Naive thymus-derived CD4-positive, alpha-beta T cell (primary cell): ENCODE measurements at regions of chr3 and their contacts with region 1.

Region 1: DNA sequence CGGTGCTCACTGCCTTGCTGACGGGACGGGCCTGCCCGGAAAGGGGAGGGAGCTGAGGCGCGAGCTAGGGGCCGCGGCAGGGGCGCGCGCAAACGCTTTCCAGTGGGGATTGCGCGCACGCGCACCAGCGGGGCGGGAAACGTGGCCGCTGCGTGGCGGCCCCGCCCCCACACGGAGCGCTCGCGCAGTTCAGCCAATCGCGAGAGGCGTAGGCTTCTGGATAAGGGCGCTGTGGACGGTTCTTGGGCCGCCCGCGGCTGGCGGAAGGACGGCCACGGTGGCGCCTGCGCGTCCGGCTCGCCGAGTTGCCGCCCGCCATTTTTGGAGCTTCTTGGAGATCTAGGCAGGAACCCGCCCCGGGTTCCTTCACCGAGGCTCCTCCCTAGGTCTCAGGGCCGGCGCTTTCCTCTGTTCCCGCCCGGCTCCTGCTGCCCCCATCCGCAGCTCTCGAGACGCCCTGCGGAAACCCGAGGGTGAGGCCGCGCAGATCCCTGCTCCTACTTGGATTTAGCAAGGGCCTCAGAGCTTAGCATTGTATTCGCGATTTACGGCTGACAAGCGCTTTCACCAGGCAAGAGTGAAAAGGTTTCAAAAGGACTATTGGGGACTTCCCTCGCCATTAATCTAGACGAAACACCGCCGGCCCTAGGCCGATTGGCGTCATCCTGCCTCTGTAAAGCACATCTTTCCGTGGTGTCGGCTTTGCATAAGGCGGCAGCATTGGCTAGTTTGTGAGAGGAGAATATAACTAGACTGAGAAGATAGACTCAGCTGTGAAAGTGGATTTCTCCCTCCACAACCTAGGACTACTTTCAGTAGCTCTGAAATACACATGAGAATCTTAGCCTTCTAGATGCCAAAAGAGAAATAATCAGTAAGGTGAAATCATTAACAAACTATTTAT is 496 bp upstream of the STAG1 start:
- DNase-seq: peak; percentile 95 to 99 (median 99)
- ATAC-seq: peak; percentile 91
- H3K4me3 ChIP-seq: peak overlapping the region; percentile 87
- H3K4me3 Mint-ChIP-seq: peak overlapping the region; percentile 68 to 99 (median 88)
- H3K27ac ChIP-seq: peak overlapping the region; percentile 95
- H3K27ac Mint-ChIP-seq: peak overlapping the region; percentile 80 to 98 (median 94)
- H3K4me1 ChIP-seq: peaks cover 20 to 27% of the 10 kb centered on the region in 2 donors
- H3K4me1 Mint-ChIP-seq: peaks cover 37 to 50% (median 43%) of the 10 kb centered on the region in 7 donors
- H3K27me3 ChIP-seq: no peaks in the 10 kb centered on the region
- H3K27me3 Mint-ChIP-seq: no peaks in the 10 kb centered on the region

Region 2: GRCh38 chr3:135141160-135141559 is 1611.5 kb before region 1 on chr3:
- CTCF ChIA-PET with region 1: no interaction called
- POLR2A ChIA-PET with region 1: no interaction called
- intact Hi-C with region 1: no loop called
- DNase-seq: no peak
- ATAC-seq: no peak
- H3K4me3 ChIP-seq: no peak overlapping the region
- H3K4me3 Mint-ChIP-seq: no peak overlapping the region
- H3K27ac ChIP-seq: no peak overlapping the region
- H3K27ac Mint-ChIP-seq: no peak overlapping the region
- H3K4me1 ChIP-seq: no peaks in the 10 kb centered on the region
- H3K4me1 Mint-ChIP-seq: peaks cover 0 to 2% (median 0%) of the 10 kb centered on the region in 7 donors
- H3K27me3 ChIP-seq: no peaks in the 10 kb centered on the region
- H3K27me3 Mint-ChIP-seq: peaks cover 0 to 13% (median 5%) of the 10 kb centered on the region in 5 donors

Region 3: GRCh38 chr3:136196401-136197158 is 556.1 kb before region 1 on chr3:
- CTCF ChIA-PET with region 1: interaction called, 7 read pairs
- POLR2A ChIA-PET with region 1: interaction called, 68 read pairs
- intact Hi-C with region 1: loop called (anchors 1 kb)
- DNase-seq: peak; percentile 94 to 99 (median 98)
- ATAC-seq: peak; percentile 73
- H3K4me3 ChIP-seq: peak overlapping the region; percentile 77
- H3K4me3 Mint-ChIP-seq: peak overlapping the region; percentile 91 to 99 (median 98)
- H3K27ac ChIP-seq: peak overlapping the region; percentile 94
- H3K27ac Mint-ChIP-seq: peak overlapping the region; percentile 96 to 100 (median 99)
- H3K4me1 ChIP-seq: peaks cover 6 to 11% of the 10 kb centered on the region in 2 donors
- H3K4me1 Mint-ChIP-seq: peaks cover 20 to 38% (median 35%) of the 10 kb centered on the region in 7 donors
- H3K27me3 ChIP-seq: no peaks in the 10 kb centered on the region
- H3K27me3 Mint-ChIP-seq: peaks cover 0 to 7% (median 0%) of the 10 kb centered on the region in 5 donors

Region 4: DNA sequence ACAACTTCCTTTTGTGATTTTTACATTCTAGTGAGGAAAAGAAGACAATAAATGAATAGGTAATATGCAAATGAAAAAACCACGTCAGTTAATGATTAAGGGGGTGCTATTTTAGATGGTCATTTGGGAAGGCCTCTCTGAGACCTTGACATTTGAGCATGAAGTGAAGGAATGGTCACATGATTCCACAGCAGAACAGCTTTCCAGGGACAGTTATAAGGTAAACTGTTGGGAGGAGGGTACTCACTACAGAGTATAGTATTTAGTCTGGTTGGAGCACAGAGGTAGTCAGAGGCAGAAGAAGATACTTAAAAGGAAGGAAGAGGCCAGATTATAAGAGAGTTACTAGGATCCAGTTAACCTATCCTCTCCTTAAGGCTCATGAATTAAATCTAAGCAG is 247.0 kb before region 1 on chr3:
- CTCF ChIA-PET with region 1: no interaction called
- POLR2A ChIA-PET with region 1: no interaction called
- intact Hi-C with region 1: loop called in 1 of 2 experiments (anchors 5 kb)
- DNase-seq: no peak
- ATAC-seq: no peak
- H3K4me3 ChIP-seq: no peak overlapping the region
- H3K4me3 Mint-ChIP-seq: no peak overlapping the region
- H3K27ac ChIP-seq: no peak overlapping the region
- H3K27ac Mint-ChIP-seq: peak overlapping the region in 3 of 9 donors; percentile 19 to 44 (median 34)
- H3K4me1 ChIP-seq: no peaks in the 10 kb centered on the region
- H3K4me1 Mint-ChIP-seq: peaks cover 0 to 16% (median 6%) of the 10 kb centered on the region in 7 donors
- H3K27me3 ChIP-seq: no peaks in the 10 kb centered on the region
- H3K27me3 Mint-ChIP-seq: no peaks in the 10 kb centered on the region

Region 5: DNA sequence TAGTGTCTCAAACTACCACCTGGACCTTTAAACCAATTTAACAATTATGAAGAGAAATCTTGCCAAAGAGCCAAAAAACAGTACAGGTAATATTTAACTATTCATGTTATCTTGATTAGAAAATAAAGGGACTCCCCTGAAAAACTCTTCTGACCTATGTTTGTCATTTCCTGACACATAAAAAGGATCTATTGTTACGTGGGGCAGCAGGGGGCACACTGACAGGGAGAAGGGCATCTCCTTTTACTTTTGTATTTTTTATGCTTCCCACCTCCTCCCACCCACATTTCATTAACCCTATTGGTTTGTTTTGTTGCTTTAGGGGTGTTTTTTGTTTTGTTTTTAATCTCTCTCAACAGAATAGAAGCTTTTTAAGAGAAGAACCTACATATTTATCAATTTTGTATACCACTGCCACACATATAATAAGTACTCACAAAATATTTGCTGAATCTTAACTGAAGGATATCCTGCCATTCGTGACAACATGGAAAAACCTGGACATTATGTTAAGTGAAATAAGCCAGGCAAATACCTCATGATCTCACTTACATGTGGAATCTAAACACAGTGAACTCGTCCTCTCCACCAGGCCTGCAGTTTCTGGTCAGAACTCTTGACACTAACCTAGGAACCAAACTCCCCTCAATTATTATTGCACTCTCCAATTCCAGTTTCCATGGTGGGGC is 18.1 kb before region 1 on chr3:
- CTCF ChIA-PET with region 1: interaction called, 5 read pairs
- POLR2A ChIA-PET with region 1: interaction called, 4 read pairs
- intact Hi-C with region 1: loop called in 1 of 2 experiments (anchors 1 kb)
- DNase-seq: peak in 1 of 9 donors; percentile 8
- ATAC-seq: peak; percentile 54
- H3K4me3 ChIP-seq: no peak overlapping the region
- H3K4me3 Mint-ChIP-seq: peak overlapping the region in 5 of 10 donors; percentile 2 to 40 (median 26)
- H3K27ac ChIP-seq: no peak overlapping the region
- H3K27ac Mint-ChIP-seq: peak overlapping the region in 7 of 9 donors; percentile 1 to 83 (median 32)
- H3K4me1 ChIP-seq: peaks cover 20 to 37% of the 10 kb centered on the region in 2 donors
- H3K4me1 Mint-ChIP-seq: peaks cover 43 to 79% (median 62%) of the 10 kb centered on the region in 7 donors
- H3K27me3 ChIP-seq: no peaks in the 10 kb centered on the region
- H3K27me3 Mint-ChIP-seq: no peaks in the 10 kb centered on the region

Region 6: GRCh38 chr3:136892388-136892787 is 139.7 kb after region 1 on chr3:
- CTCF ChIA-PET with region 1: no interaction called
- POLR2A ChIA-PET with region 1: no interaction called
- intact Hi-C with region 1: no loop called
- DNase-seq: no peak
- ATAC-seq: no peak
- H3K4me3 ChIP-seq: no peak overlapping the region
- H3K4me3 Mint-ChIP-seq: peak overlapping the region in 5 of 10 donors; percentile 1 to 48 (median 42)
- H3K27ac ChIP-seq: no peak overlapping the region
- H3K27ac Mint-ChIP-seq: peak overlapping the region in 2 of 9 donors; percentile 4 to 22
- H3K4me1 ChIP-seq: peaks cover 2 to 7% of the 10 kb centered on the region in 2 donors
- H3K4me1 Mint-ChIP-seq: peaks cover 38 to 78% (median 65%) of the 10 kb centered on the region in 7 donors
- H3K27me3 ChIP-seq: no peaks in the 10 kb centered on the region
- H3K27me3 Mint-ChIP-seq: no peaks in the 10 kb centered on the region

Region 7: DNA sequence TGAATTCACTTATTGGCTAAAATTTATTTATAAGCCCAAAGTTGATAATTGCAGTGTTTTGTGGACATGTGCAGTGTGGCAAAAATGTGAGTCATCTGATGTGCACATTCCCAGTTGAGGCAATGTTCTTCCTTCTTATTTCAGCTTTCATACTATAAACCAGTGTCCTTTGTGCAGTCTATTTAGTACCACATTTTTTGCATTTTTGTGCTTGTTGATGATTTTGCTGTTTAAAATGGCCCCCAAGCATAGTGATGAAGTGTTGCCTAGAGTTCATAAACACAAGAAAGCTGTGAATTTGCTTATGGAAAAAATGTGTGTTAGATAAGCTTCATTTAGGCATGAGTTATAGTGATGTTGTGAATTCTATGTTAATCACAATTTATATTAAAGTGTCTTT is 185.7 kb after region 1 on chr3:
- CTCF ChIA-PET with region 1: interaction called, 3 read pairs
- POLR2A ChIA-PET with region 1: no interaction called
- intact Hi-C with region 1: loop called in 1 of 2 experiments (anchors 2 kb)
- DNase-seq: no peak
- ATAC-seq: no peak
- H3K4me3 ChIP-seq: no peak overlapping the region
- H3K4me3 Mint-ChIP-seq: peak overlapping the region in 3 of 10 donors; percentile 2 to 66 (median 16)
- H3K27ac ChIP-seq: no peak overlapping the region
- H3K27ac Mint-ChIP-seq: peak overlapping the region in 1 of 9 donors; percentile 13
- H3K4me1 ChIP-seq: peaks cover 10 to 35% of the 10 kb centered on the region in 2 donors
- H3K4me1 Mint-ChIP-seq: peaks cover 45 to 82% (median 69%) of the 10 kb centered on the region in 7 donors
- H3K27me3 ChIP-seq: no peaks in the 10 kb centered on the region
- H3K27me3 Mint-ChIP-seq: no peaks in the 10 kb centered on the region

Region 8: GRCh38 chr3:138329127-138329983 is 1576.7 kb after region 1 on chr3 and contains the start of gene NME9:
- CTCF ChIA-PET with region 1: no interaction called
- POLR2A ChIA-PET with region 1: no interaction called
- intact Hi-C with region 1: loop called in 1 of 2 experiments (anchors 1 kb)
- DNase-seq: peak; percentile 79 to 91 (median 86)
- ATAC-seq: peak; percentile 95
- H3K4me3 ChIP-seq: peak within 1 kb of the TSS; percentile 78
- H3K4me3 Mint-ChIP-seq: peak within 1 kb of the TSS; percentile 91 to 99 (median 97)
- H3K27ac ChIP-seq: peak within 1 kb of the TSS; percentile 86
- H3K27ac Mint-ChIP-seq: peak within 1 kb of the TSS; percentile 85 to 98 (median 94)
- H3K4me1 ChIP-seq: peaks cover 5 to 8% of the 10 kb centered on the region in 2 donors
- H3K4me1 Mint-ChIP-seq: peaks cover 12 to 40% (median 36%) of the 10 kb centered on the region in 7 donors
- H3K27me3 ChIP-seq: no peaks in the 10 kb centered on the region
- H3K27me3 Mint-ChIP-seq: peaks cover 0 to 10% (median 0%) of the 10 kb centered on the region in 5 donors
- total RNA-seq, gene NME9: 0.69 to 2.0 (median 1.2) TPM in 4 of 5 experiments, not detected in the other